Esophagus muscularis mucosa (tissue), 4 donors: ENCODE measurements at regions of chr16 and their contacts with region 1.

Region 1: DNA sequence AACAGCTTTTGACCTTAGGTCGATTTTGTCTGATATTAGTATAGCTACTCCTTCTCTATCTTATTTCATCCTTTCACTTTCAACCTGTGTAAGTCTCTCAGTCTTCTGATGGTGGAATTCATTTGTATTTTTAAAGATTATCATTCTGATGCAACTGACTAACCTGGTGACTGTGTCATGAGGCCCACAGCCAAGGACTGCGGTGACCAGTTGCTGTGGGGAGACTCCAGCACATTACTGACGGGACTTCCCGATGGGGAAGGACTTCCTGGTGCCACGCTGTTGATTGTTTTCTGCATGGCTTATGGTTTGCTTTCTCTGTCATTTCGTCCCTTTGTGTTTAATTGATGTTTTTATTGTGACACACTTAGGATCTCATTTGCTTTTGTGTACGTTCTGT is 34.2 kb downstream of the RMI2 start:
- DNase-seq: no peak
- H3K4me3 ChIP-seq: no peak overlapping the region
- H3K27ac ChIP-seq: no peak overlapping the region
- H3K4me1 ChIP-seq: no peaks in the 10 kb centered on the region
- H3K27me3 ChIP-seq: no peaks in the 10 kb centered on the region
- CTCF ChIP-seq: no peak
- EP300 ChIP-seq: no peak
- POLR2A ChIP-seq: no peak

Region 2: DNA sequence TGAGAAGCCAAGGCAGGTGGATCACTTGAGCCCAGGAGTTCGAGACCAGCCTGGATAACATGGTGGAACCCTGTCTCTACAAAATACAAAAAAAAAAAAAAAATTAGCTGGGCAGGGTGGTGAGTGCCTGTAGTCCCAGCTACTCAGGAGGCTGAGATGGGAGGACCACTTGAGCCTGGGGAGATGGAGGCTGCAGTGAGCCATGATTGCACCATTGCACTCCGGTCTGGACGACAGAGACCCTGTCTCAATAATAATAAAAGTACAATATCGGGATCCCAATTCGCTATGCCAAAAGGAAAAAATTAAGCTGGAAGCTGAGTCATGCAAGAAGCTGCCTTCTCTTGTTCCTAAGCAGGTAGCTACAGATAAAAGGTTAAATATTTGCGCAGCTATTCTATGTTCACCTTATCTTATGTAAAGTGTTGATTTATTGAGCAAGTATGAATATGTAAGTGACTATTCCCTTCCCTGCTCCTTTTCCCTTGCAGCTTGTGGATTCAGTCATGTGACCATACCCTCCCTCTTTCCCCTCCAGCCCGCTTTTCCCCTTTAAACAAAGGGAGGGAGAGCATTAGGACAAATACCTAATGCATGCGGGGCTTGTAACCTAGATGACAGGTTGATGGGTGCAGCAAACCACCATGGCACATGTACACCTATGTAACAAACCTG is 95.3 kb after region 1 on chr16:
- intact Hi-C with region 1: loop called (anchors 5 kb)
- DNase-seq: no peak
- H3K4me3 ChIP-seq: no peak overlapping the region
- H3K27ac ChIP-seq: no peak overlapping the region
- H3K4me1 ChIP-seq: no peaks in the 10 kb centered on the region
- H3K27me3 ChIP-seq: peaks cover 0 to 20% (median 0%) of the 10 kb centered on the region in 4 donors
- CTCF ChIP-seq: no peak
- EP300 ChIP-seq: no peak
- POLR2A ChIP-seq: no peak